ENCODE measurements at regions of chr5 and their contacts with region 1.

Region 1: GRCh38 chr5:1641560-1642166 is 117.9 kb upstream of the LPCAT1 start:
- DNase-seq: peak; percentile 75
- H3K4me3 Mint-ChIP-seq: no peak overlapping the region
- H3K27ac Mint-ChIP-seq: no peak overlapping the region
- H3K4me1 Mint-ChIP-seq: peaks cover 10% of the 10 kb centered on the region
- H3K27me3 Mint-ChIP-seq: peaks cover 34% of the 10 kb centered on the region

Region 2: GRCh38 chr5:1167728-1168709 is 473.6 kb before region 1 on chr5:
- intact Hi-C with region 1: loop called (anchors 1 kb)
- DNase-seq: peak; percentile 58
- H3K4me3 Mint-ChIP-seq: peak overlapping the region; percentile 67
- H3K27ac Mint-ChIP-seq: no peak overlapping the region
- H3K4me1 Mint-ChIP-seq: peaks cover 6% of the 10 kb centered on the region
- H3K27me3 Mint-ChIP-seq: peaks cover 4% of the 10 kb centered on the region

Region 3: GRCh38 chr5:1380011-1380817 is 261.4 kb before region 1 on chr5:
- intact Hi-C with region 1: loop called (anchors 2 kb)
- DNase-seq: peak; percentile 53
- H3K4me3 Mint-ChIP-seq: peak overlapping the region; percentile 68
- H3K27ac Mint-ChIP-seq: peak overlapping the region; percentile 65
- H3K4me1 Mint-ChIP-seq: peaks cover 5% of the 10 kb centered on the region
- H3K27me3 Mint-ChIP-seq: no peaks in the 10 kb centered on the region

Region 4: DNA sequence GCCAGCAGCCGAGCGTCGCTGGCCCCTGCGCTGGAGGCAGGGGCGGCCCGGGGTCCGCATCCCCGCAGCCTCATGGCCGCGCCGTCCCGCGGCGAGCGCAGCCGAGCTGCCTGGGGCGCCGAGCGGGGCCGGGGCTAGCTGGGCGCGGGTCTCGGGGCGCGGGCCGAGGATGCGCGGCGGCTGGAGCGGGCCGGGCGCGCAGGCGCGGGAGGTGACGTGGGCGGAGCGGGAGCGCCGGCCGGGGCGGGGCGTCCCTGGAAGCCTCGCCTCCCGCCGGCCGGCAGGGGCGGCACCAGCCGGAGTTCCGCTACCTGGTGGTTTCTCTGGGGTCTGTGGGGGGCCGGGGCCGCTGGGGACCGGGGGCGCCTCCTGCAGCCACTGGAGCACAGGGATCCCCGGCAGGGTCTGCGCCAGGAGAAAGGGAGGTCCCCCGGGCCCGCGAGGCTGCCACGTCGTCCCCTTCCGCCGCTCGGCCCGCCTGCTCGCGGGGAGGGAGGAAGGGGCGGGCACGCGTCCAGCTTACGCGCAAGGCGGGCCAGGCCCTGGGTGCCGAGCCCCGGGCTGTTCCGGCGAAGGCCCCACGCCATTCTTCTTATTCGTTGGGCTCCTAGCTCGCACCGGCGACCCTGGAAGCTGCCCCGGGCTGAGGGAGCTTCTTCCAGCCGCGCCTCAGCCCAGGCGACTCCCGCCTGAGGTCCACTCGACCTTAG is 117.7 kb before region 1 on chr5 and contains the start of gene LPCAT1:
- intact Hi-C with region 1: loop called (anchors 10 kb)
- DNase-seq: peak; percentile 77
- H3K4me3 Mint-ChIP-seq: peak within 1 kb of the TSS; percentile 85
- H3K27ac Mint-ChIP-seq: peak within 1 kb of the TSS; percentile 50
- H3K4me1 Mint-ChIP-seq: peaks cover 16% of the 10 kb centered on the region
- H3K27me3 Mint-ChIP-seq: peaks cover 4% of the 10 kb centered on the region
- total RNA-seq, gene LPCAT1: 78.4 and 79.0 TPM in 2 replicates

Region 5: GRCh38 chr5:1763548-1763911 is 121.9 kb after region 1 on chr5:
- intact Hi-C with region 1: no loop called
- DNase-seq: no peak
- H3K4me3 Mint-ChIP-seq: no peak overlapping the region
- H3K27ac Mint-ChIP-seq: no peak overlapping the region
- H3K4me1 Mint-ChIP-seq: no peaks in the 10 kb centered on the region
- H3K27me3 Mint-ChIP-seq: peaks cover 4% of the 10 kb centered on the region